ENCODE measurements at regions of chr1 and their contacts with region 1.

Region 1: DNA sequence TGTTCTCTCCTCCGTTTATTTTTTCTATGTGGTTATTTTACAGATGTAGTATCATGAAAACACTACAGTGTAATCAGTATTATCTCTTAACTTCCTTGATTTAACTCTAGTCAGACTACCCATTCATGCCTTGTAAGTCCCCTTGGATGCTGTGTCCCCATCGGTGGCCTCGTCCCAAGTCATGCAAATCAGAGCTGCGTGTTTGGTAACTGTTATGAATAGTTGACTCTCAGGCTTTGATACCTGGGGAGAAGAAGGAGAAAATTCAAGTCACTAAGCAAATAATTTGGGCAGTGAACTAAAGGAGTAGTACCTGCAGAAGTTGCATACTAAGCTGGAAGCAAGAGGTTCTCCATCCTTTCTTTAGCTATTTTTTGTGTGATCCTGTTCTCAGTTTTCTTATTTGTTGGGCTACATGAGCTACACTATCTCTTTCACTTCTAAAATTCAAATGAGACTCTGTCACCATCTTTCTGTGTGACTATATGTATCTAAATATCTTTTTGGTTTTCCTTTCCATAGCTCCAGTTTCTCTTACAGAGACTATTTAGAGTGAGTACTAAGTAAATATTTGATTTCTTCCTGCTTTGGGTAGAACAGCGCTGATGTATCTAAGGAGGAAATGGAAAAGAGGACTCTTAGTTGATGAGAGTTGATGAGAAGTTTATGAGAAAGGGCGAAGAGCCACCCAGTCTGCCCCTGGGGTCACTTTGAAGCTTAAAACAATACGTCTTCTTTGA is 50.9 kb downstream of the VANGL2 start:
- DNase-seq: no peak
- H3K4me3 Mint-ChIP-seq: peak overlapping the region; percentile 18
- H3K27ac Mint-ChIP-seq: peak overlapping the region; percentile 63
- H3K4me1 Mint-ChIP-seq: peaks cover 69% of the 10 kb centered on the region
- H3K27me3 Mint-ChIP-seq: no peaks in the 10 kb centered on the region

Region 2: GRCh38 chr1:160437432-160438316 is 13.6 kb before region 1 on chr1:
- CTCF ChIA-PET with region 1: interaction called, 4 read pairs
- POLR2A ChIA-PET with region 1: interaction called, 14 read pairs
- DNase-seq: peak; percentile 41
- H3K4me3 Mint-ChIP-seq: peak overlapping the region; percentile 69
- H3K27ac Mint-ChIP-seq: peak overlapping the region; percentile 89
- H3K4me1 Mint-ChIP-seq: peaks cover 35% of the 10 kb centered on the region
- H3K27me3 Mint-ChIP-seq: no peaks in the 10 kb centered on the region

Region 3: DNA sequence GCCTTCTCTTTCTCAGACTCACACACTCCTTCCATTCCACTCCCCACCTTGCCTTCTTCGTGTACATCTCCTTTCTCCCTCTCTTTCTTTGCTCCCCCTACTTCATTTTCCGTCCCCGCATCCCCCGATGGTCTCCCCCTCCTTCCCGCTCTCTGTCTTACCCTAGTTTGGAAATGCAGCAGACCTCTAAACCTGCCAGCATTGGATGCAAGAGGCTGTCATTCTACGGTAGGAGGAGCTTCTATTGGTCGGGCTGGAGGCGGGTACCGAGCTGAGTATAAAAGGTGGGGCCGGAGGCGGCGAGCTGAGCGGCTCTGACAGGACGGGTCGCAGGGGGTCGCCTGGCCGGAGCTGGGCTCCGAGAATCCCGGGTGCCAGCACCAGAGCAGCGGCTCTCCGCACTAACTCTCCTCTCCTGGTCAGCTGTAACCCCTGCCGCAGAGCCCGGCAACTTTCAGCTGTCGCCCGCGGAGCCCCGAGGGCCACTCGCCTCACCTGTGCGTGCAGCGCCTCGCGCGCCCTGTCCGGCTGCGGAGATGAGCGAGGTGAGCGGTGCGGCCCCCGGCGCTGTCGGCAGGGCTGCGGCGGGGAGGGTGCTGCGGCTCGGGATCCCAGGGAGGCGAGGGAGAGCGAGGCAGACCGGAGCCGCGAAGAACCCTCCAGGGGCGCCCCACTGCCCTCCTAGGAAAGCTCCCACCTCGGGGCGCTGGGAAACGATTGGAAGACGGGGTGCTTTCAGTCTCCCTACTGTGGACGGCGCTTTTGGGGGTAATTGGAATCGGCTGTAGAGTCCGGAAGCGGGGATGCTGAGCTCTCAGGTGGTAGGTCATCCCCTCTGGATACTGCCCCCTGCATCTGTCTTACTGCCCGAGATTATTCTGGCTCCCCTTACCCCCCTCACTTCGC is 807.4 kb after region 1 on chr1 and contains the start of gene PCP4L1:
- CTCF ChIA-PET with region 1: no interaction called
- POLR2A ChIA-PET with region 1: no interaction called
- DNase-seq: peak; percentile 31
- H3K4me3 Mint-ChIP-seq: peak within 1 kb of the TSS; percentile 34
- H3K27ac Mint-ChIP-seq: no peak within 1 kb of the TSS
- H3K4me1 Mint-ChIP-seq: peaks cover 15% of the 10 kb centered on the region
- H3K27me3 Mint-ChIP-seq: peaks cover 66% of the 10 kb centered on the region
- total RNA-seq, gene PCP4L1: 0.28 TPM in 1 of 2 experiments, not detected in the other